ENCODE measurements at regions of chr3 and their contacts with region 1.

Region 1: DNA sequence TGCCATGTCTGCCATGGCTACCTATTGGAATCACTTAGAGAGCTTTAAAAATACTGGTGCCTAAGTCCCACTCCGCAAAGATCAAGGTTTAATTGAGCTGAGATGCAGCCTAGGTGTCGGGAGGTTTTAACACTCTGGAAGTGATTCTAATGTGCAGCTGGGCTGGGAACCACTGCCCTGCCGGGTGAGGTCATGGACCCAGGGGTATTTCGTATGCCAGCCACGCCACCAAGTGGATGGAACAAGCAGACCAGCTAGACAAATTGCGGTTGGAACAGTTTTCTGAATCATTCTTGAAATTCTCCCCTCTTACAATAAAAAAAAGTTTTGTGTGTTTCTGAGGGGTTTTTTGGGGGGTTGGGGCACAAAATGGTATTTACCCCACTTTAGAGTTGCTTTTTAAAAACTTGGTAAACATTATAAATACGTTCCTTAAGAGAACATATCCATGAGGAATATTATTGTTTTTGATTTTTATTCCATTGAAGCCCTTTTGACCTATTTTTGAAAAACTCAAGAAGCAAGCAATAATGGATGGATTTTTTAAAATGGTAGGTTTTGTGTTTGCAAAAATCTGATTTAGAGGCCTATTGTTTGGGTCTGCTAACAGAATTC is 66.2 kb upstream of the CSTA start:
- DNase-seq: peak in 8 of 10 donors; percentile 23 to 92 (median 54)

Region 2: DNA sequence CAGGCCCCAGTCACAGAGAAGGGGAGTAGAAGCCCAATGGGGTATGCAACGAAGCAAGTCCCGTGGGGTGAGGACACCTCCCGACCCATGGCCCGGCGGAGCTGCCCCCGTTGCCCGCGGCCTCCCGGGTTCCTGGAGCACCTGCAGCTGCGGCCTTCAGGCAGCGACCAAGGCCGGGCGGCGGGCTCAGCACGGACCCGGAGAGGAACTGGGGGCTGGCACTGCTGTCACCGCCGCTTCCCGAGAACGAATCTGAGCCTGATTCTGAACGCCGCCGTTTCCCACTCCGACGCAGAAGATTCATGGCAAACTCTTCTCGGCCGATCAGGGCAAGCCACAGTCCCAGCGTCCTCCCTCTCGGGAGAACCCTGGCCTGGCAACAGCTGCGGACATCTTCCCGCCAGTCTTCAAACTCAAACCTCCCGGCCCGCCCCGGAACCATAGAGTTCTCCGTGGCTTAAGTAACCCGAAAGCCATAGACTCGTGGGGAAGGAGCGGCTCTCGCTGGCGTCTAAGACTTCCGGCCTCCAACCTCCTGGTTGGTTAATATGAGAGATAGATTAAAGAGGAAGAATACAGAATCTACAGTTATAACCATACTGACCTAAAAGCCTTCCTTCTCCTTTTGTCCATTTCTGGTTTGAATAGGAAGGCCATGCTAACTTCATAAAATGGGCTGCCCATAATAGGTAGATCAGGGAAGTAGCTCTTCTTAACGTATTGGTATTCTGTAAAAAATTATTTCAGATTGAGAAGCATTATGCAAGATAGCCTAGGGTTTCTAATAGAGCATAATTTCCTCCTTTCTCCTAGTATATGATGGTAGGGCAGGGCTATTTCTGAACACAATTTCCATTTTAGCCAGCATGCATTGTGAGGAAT is 713.0 kb before region 1 on chr3 and contains the start of gene POLQ:
- intact Hi-C with region 1: loop called (anchors 2 kb)
- DNase-seq: peak; percentile 89 to 99 (median 94)

Region 3: GRCh38 chr3:122101646-122102045 is 157.2 kb before region 1 on chr3:
- intact Hi-C with region 1: loop called (anchors 5 kb)
- DNase-seq: no peak